CD8-positive, alpha-beta T cell (primary cell): ENCODE measurements at regions of chr6 and their contacts with region 1.

Region 1: DNA sequence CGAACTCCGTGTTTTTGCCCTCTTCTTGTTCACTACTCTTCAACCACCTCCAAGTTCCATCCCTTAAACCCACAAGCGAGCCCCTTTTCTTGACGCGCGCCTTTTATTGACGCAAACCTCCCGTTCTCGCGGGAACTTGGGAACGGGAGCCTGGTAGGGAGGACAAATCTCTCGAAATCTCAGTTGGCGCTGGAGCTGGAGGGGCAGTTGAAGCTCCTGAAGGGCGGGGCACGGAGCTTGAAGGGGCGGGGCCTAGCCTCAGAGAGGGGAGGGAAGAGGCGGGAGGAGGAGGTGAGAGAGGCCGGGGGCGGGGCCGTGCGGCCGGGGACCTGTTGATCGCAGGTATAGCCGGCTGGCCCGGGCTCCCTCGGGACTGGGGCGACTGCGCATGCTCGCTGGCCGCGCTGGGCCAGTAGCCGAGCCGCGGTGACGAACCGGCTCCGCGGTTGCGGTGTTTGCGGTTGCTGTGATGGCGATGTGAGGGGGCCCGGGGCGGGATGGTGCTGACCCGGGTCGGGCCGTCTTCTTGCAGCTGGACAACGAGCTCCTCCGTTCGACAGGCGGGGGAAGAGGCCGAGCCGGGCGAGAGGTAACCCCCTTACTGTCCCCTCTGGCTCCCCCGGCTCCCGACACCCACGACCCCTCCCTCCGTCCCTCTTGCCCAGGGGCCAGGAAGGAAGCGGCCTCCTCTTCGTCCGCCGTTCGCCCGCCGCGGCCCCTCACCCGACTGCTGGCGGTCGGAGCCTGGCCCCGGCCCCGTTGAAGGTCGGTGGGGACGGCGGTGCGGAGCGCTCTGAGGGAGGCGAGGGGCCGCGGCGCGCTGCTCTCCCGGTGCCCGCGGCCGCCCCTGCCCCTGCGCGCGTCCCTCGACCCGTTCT is at the start of gene FAM135A:
- DNase-seq: peak; percentile 85 to 96 (median 93)
- ATAC-seq: peak; percentile 96
- H3K4me3 ChIP-seq: peak within 1 kb of the TSS; percentile 65 to 72
- H3K4me3 Mint-ChIP-seq: peak within 1 kb of the TSS; percentile 91
- H3K27ac ChIP-seq: peak within 1 kb of the TSS; percentile 47 to 63
- H3K27ac Mint-ChIP-seq: peak within 1 kb of the TSS; percentile 91
- H3K4me1 ChIP-seq: peaks cover 8% of the 10 kb centered on the region
- H3K4me1 Mint-ChIP-seq: peaks cover 24% of the 10 kb centered on the region
- H3K27me3 ChIP-seq: no peaks in the 10 kb centered on the region
- H3K27me3 Mint-ChIP-seq: no peaks in the 10 kb centered on the region
- CTCF ChIP-seq: no peak
- total RNA-seq, gene FAM135A: 5.8 to 6.5 TPM

Region 2: DNA sequence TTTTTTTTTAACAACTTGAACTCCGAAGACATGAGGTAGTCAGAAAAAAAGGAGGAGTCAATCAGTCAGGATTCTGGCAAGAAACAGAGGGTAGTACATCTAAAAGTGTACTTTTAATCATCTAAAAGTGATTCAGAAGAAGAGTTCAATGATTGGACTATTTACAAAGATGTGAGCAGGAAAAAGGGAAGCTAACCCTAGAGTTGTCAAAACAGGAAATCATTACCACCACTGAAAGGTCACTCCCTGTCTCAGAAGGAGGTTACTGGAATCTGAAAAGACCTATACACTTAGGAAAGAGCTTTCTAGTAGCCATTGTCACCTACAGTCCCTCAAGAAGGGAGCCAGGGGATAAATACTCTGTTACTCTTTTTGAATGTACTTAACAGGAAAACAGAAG is 599.8 kb before region 1 on chr6:
- CTCF ChIA-PET with region 1: no interaction called
- POLR2A ChIA-PET with region 1: no interaction called
- intact Hi-C with region 1: loop called in 1 of 2 experiments (anchors 5 kb)
- DNase-seq: peak in 1 of 9 experiments; percentile 27
- ATAC-seq: no peak
- H3K4me3 ChIP-seq: no peak overlapping the region
- H3K4me3 Mint-ChIP-seq: peak overlapping the region; percentile 12
- H3K27ac ChIP-seq: peak overlapping the region in 1 of 2 experiments; percentile 55
- H3K27ac Mint-ChIP-seq: peak overlapping the region; percentile 87
- H3K4me1 ChIP-seq: peaks cover 45% of the 10 kb centered on the region
- H3K4me1 Mint-ChIP-seq: peaks cover 56% of the 10 kb centered on the region
- H3K27me3 ChIP-seq: no peaks in the 10 kb centered on the region
- H3K27me3 Mint-ChIP-seq: no peaks in the 10 kb centered on the region
- CTCF ChIP-seq: no peak

Region 3: GRCh38 chr6:70566751-70567382 is 153.5 kb after region 1 on chr6 and contains the start of gene SDHAF4:
- CTCF ChIA-PET with region 1: no interaction called
- POLR2A ChIA-PET with region 1: no interaction called
- intact Hi-C with region 1: loop called (anchors 1 to 5 kb)
- DNase-seq: peak; percentile 90 to 96 (median 95)
- ATAC-seq: peak; percentile 99
- H3K4me3 ChIP-seq: peak within 1 kb of the TSS; percentile 89 to 93
- H3K4me3 Mint-ChIP-seq: peak within 1 kb of the TSS; percentile 87
- H3K27ac ChIP-seq: peak within 1 kb of the TSS; percentile 61 to 82
- H3K27ac Mint-ChIP-seq: peak within 1 kb of the TSS; percentile 92
- H3K4me1 ChIP-seq: peaks cover 13% of the 10 kb centered on the region
- H3K4me1 Mint-ChIP-seq: peaks cover 24% of the 10 kb centered on the region
- H3K27me3 ChIP-seq: no peaks in the 10 kb centered on the region
- H3K27me3 Mint-ChIP-seq: no peaks in the 10 kb centered on the region
- CTCF ChIP-seq: no peak
- total RNA-seq, gene SDHAF4: 1.4 to 1.7 TPM

Region 4: DNA sequence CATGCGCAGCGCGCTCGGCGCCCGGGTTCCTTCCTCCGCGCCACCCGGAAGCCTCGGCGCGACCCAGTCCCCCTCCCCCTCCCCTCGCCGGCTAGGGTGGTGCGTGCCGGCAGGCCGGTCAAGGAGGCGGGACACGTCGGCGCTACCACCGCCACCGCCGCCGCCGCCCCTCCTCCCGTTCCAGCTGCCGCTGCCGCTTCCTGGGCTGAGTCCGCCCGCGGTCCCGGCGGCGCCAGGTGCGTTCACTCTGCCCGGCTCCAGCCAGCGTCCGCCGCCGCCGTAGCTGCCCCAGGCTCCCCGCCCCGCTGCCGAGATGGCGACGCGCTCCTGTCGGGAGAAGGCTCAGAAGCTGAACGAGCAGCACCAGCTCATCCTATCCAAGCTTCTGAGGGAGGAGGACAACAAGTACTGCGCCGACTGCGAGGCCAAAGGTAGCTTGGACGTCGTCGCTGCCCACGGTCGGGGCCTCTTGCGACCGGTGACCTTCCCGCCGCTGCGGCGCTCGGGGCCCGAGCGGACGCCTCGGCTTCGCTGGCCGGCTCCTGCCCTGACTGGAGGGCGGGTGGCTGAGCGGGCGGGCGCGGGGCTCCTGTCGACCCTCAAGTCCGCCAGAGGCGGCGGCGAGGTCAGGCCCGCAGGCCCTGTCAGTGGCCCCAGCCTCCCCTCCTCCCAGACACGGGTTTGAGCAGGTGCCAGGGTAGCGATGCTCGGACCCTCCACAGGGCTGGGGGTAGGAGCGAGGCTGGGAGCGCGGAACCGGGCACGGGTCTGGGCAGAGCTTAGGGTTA is 254.6 kb after region 1 on chr6 and contains the start of gene SMAP1:
- CTCF ChIA-PET with region 1: interaction called, 4 read pairs
- POLR2A ChIA-PET with region 1: interaction called, 14 read pairs
- intact Hi-C with region 1: loop called (anchors 1 to 5 kb)
- DNase-seq: peak; percentile 79 to 97 (median 93)
- ATAC-seq: peak; percentile 91
- H3K4me3 ChIP-seq: peak within 1 kb of the TSS; percentile 76 to 87
- H3K4me3 Mint-ChIP-seq: peak within 1 kb of the TSS; percentile 90
- H3K27ac ChIP-seq: peak within 1 kb of the TSS; percentile 53 to 75
- H3K27ac Mint-ChIP-seq: peak within 1 kb of the TSS; percentile 92
- H3K4me1 ChIP-seq: peaks cover 39% of the 10 kb centered on the region
- H3K4me1 Mint-ChIP-seq: peaks cover 53% of the 10 kb centered on the region
- H3K27me3 ChIP-seq: no peaks in the 10 kb centered on the region
- H3K27me3 Mint-ChIP-seq: no peaks in the 10 kb centered on the region
- CTCF ChIP-seq: no peak
- total RNA-seq, gene SMAP1: 21.2 to 21.8 TPM